CD8-positive, alpha-beta T cell (primary cell): ENCODE measurements at regions of chr3 and their contacts with region 1.

Region 1: DNA sequence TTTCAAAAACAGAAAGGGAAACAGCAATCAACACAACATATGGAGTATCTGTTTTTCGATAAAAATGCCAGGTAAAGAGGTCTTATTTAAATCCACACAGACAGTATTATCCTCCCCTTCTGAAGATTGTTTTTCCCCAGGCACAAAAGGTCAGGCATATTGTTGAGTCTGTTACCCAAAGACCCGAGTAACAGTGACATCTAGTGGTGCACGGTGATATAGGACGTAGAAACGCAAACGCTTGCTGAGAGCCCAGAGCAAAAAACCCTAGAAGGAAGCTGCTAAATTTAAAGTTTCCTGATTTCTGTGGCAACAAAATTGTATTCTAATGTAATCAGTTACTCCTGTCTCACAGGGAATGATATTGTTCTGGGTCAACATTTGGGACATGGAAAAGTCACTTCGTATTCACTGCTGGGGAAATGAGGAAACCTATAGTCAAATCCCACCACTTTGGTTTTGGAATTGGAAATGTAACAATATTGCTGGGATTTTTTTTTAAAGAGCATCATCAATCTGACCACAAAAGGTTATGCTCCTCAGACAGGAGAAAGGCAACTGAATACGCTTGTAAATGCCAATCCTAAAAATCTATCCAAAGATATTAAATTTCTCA is 312.7 kb upstream of the CCDC54 start:
- DNase-seq: peak in 8 of 9 experiments; percentile 25 to 71 (median 51)
- ATAC-seq: peak; percentile 78
- H3K4me3 ChIP-seq: no peak overlapping the region
- H3K4me3 Mint-ChIP-seq: no peak overlapping the region
- H3K27ac ChIP-seq: no peak overlapping the region
- H3K27ac Mint-ChIP-seq: no peak overlapping the region
- H3K4me1 ChIP-seq: peaks cover 5% of the 10 kb centered on the region
- H3K4me1 Mint-ChIP-seq: peaks cover 11% of the 10 kb centered on the region
- H3K27me3 ChIP-seq: no peaks in the 10 kb centered on the region
- H3K27me3 Mint-ChIP-seq: peaks cover 7% of the 10 kb centered on the region
- CTCF ChIP-seq: peak; percentile 68

Region 2: DNA sequence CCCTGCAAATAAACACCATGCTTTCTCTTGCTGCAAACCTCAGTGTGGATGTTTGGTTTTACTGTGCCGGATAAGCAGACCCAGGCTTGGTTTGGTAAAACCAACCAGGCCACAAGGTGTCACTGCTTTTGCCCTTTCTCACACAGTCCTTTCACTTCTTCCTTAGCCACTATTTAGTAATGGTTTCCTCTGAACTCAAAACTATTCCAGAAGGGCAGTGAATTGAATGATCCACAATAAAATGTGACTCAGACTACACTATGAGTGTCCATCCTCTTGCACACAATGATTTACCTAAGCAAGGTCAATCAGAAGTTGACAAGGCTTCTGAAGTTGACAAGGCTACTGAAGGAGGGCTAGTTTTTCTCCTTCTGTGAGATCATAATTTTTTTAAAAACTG is 239.7 kb before region 1 on chr3:
- CTCF ChIA-PET with region 1: no interaction called
- POLR2A ChIA-PET with region 1: no interaction called
- intact Hi-C with region 1: loop called (anchors 2 to 10 kb)
- DNase-seq: peak in 1 of 9 experiments; percentile 29
- ATAC-seq: no peak
- H3K4me3 ChIP-seq: no peak overlapping the region
- H3K4me3 Mint-ChIP-seq: no peak overlapping the region
- H3K27ac ChIP-seq: no peak overlapping the region
- H3K27ac Mint-ChIP-seq: no peak overlapping the region
- H3K4me1 ChIP-seq: no peaks in the 10 kb centered on the region
- H3K4me1 Mint-ChIP-seq: peaks cover 6% of the 10 kb centered on the region
- H3K27me3 ChIP-seq: no peaks in the 10 kb centered on the region
- H3K27me3 Mint-ChIP-seq: no peaks in the 10 kb centered on the region
- CTCF ChIP-seq: no peak

Region 3: DNA sequence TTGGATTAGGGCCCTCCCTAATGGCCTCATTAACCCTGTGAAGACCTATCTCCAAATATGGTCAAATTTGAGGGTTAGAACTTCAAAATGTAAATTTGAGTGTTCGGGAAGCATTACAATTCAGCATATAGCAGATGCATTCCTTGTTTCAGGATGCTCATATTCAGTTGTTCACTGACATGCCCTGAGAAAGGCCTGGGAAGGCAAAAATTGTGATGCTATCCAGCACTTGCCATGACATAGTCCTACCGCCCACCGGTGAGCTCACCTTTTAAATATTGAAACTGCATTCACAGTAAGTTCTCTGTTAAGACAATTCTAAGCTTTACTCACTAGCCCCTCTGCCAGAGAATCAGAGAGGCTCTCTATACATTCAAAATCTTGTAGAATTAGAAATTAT is 12.4 kb after region 1 on chr3:
- CTCF ChIA-PET with region 1: interaction called, 16 read pairs
- POLR2A ChIA-PET with region 1: interaction called, 3 read pairs
- intact Hi-C with region 1: no loop called
- DNase-seq: no peak
- ATAC-seq: no peak
- H3K4me3 ChIP-seq: no peak overlapping the region
- H3K4me3 Mint-ChIP-seq: no peak overlapping the region
- H3K27ac ChIP-seq: no peak overlapping the region
- H3K27ac Mint-ChIP-seq: no peak overlapping the region
- H3K4me1 ChIP-seq: no peaks in the 10 kb centered on the region
- H3K4me1 Mint-ChIP-seq: no peaks in the 10 kb centered on the region
- H3K27me3 ChIP-seq: no peaks in the 10 kb centered on the region
- H3K27me3 Mint-ChIP-seq: no peaks in the 10 kb centered on the region
- CTCF ChIP-seq: no peak